Heart right ventricle (tissue), 16 donors: ENCODE measurements at regions of chr2 and their contacts with region 1.

Region 1: DNA sequence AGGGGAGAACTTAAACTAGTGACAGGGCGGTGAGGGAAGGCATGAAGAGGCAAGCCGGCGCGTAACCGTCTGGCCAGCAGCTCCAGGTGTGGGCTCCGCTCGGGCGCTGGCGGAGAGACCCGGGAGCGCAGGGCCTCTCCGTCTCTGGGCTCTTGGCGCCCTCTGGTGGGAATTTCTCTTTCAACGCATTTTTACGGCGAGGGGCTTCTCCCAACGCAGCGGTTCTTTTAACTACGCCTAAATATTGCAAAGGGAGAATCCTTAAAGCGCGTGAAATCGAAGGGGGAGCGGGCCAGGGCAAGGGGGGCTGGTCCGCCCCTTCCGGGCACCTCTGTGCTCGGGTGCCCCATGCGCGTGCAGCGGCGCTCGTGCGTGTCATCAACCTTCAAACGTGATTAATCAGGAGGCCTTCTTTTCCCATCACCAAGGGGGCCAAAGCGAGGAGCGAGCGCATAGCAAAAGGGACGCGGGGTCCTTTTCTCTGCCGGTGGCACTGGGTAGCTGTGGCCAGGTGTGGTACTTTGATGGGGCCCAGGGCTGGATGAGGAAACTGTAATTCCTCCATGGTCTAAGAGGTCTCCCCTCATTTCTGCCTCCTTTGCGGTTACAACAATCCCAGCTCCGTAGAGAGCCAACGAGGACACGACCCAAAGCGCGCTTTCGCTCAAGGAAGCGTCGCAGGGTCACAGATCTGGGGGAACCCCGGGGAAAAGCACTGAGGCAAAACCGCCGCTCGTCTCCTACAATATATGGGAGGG is 762 bp upstream of the GAD1 start:
- DNase-seq: peak; percentile 48 to 54
- ATAC-seq: peak in 7 of 8 donors; percentile 51 to 79 (median 62)
- H3K4me3 ChIP-seq: peak overlapping the region in 9 of 10 donors; percentile 24 to 56 (median 45)
- H3K27ac ChIP-seq: no peak overlapping the region
- H3K4me1 ChIP-seq: peaks cover 26 to 74% (median 54%) of the 10 kb centered on the region in 9 donors
- H3K27me3 ChIP-seq: peaks cover 54 to 91% (median 83%) of the 10 kb centered on the region in 7 donors
- CTCF ChIP-seq: peak; percentile 59 to 77 (median 75)

Region 2: GRCh38 chr2:169945515-169945914 is 870.4 kb before region 1 on chr2:
- intact Hi-C with region 1: loop called in 1 of 10 experiments (anchors 10 kb)
- DNase-seq: no peak
- ATAC-seq: no peak
- H3K4me3 ChIP-seq: no peak overlapping the region
- H3K27ac ChIP-seq: no peak overlapping the region
- H3K4me1 ChIP-seq: peaks cover 0 to 18% (median 4%) of the 10 kb centered on the region in 9 donors
- H3K27me3 ChIP-seq: no peaks in the 10 kb centered on the region
- CTCF ChIP-seq: no peak

Region 3: DNA sequence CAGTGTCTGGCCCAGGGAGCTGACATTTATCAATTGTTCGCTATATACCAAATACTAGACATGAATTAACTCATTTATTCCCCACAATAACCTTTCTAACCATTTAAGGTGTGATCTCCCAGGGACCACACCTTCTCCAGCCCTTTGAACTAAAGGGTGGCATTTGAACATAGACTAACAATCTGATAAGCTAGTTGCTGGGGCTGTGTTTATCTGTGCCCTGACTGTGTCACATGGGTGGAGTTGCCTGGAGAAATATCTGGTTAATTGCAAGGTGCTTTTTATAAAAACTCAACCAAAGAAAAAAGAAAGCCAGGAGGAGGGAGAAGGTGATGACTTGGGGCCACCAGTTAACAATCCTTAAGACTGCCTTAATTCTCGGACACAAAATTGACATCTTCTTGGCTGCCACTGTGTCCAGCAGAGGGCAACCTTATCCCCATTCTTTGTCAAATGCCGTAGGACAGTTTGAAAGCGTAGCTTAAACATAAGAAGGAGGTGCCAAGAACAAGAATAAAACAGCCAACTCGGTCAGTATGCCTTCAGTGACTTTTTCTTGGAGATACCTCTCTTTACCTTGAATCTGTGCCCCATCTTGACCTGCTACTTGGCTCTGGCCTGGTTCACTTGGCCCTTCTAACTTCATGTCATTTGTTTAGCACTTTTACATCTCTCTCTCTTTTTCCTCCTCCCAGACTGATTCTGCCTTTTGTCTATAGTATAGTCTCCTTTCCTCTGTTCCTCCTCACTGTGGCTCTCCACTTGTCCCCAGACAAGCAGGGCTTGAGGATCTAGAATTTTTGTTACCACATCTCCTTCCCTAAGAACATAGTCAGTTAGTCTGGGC is 454.6 kb before region 1 on chr2:
- intact Hi-C with region 1: loop called in 9 of 10 experiments (anchors 1 to 10 kb)
- DNase-seq: peak in 1 of 2 donors; percentile 12
- ATAC-seq: peak in 1 of 8 donors; percentile 50
- H3K4me3 ChIP-seq: no peak overlapping the region
- H3K27ac ChIP-seq: no peak overlapping the region
- H3K4me1 ChIP-seq: no peaks in the 10 kb centered on the region
- H3K27me3 ChIP-seq: peaks cover 0 to 76% (median 50%) of the 10 kb centered on the region in 7 donors
- CTCF ChIP-seq: peak; percentile 18 to 71 (median 59)

Region 4: GRCh38 chr2:170396799-170397459 is 419.0 kb before region 1 on chr2:
- intact Hi-C with region 1: loop called in 1 of 10 experiments (anchors 5 kb)
- DNase-seq: no peak
- ATAC-seq: no peak
- H3K4me3 ChIP-seq: no peak overlapping the region
- H3K27ac ChIP-seq: no peak overlapping the region
- H3K4me1 ChIP-seq: peaks cover 0 to 5% (median 0%) of the 10 kb centered on the region in 9 donors
- H3K27me3 ChIP-seq: peaks cover 0 to 43% (median 17%) of the 10 kb centered on the region in 7 donors
- CTCF ChIP-seq: peak in 6 of 9 donors; percentile 9 to 46 (median 32)

Region 5: DNA sequence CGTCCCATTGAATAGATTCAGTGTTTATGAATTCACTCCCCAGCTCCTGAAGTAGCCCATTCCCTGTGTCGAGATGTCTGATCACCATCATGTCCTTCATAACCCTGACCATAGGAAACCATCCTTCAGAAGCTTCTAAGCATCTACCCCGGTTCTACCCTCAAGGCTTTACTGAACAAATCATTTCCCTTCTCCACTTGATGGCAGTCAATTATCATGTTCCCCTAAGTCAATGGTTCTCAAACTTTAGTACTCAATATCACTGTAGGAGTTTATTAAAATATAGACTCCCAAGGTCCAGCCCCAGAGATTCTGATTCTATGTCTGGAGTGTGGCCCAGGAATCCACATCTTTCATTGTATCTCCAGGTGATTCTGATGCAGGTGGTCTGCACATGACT is 329.2 kb before region 1 on chr2:
- intact Hi-C with region 1: loop called (anchors 1 to 5 kb)
- DNase-seq: no peak
- ATAC-seq: no peak
- H3K4me3 ChIP-seq: no peak overlapping the region
- H3K27ac ChIP-seq: no peak overlapping the region
- H3K4me1 ChIP-seq: no peaks in the 10 kb centered on the region
- H3K27me3 ChIP-seq: no peaks in the 10 kb centered on the region
- CTCF ChIP-seq: peak in 7 of 9 donors; percentile 28 to 59 (median 42)